ENCODE measurements at regions of chr7 and their contacts with region 1.

Region 1: DNA sequence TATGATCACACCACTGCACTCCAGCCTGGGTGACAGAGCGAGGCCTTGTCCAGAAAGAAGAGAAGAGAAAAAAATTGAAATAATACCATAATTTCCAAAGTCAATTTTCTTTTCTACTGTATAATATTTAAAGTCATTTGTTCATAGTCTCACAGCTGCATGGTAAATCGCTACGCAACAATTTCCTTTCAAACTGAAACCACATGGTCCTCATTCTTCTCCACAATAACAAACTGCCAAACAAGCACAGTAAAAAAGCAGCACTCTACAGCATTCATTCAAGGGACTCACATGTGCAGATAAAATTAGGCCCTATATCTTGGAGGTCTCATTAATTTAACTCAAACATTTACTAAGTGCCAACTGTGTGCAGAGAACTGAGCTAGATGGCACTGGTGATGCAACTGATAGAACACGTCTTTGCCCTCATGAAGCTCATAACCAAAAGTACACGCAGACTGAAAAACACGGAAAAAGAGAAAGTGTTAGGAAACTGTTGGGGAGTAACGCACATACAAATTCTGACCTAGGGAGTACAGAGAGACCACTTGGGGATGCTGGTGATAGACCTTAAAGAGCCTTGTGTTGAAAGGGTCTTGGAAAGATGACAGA is 68.4 kb upstream of the SRRM3 start:
- DNase-seq: no peak
- H3K4me3 ChIP-seq: no peak overlapping the region
- H3K27ac ChIP-seq: no peak overlapping the region
- H3K4me1 ChIP-seq: no peaks in the 10 kb centered on the region
- H3K27me3 ChIP-seq: no peaks in the 10 kb centered on the region
- CTCF ChIP-seq: no peak

Region 2: DNA sequence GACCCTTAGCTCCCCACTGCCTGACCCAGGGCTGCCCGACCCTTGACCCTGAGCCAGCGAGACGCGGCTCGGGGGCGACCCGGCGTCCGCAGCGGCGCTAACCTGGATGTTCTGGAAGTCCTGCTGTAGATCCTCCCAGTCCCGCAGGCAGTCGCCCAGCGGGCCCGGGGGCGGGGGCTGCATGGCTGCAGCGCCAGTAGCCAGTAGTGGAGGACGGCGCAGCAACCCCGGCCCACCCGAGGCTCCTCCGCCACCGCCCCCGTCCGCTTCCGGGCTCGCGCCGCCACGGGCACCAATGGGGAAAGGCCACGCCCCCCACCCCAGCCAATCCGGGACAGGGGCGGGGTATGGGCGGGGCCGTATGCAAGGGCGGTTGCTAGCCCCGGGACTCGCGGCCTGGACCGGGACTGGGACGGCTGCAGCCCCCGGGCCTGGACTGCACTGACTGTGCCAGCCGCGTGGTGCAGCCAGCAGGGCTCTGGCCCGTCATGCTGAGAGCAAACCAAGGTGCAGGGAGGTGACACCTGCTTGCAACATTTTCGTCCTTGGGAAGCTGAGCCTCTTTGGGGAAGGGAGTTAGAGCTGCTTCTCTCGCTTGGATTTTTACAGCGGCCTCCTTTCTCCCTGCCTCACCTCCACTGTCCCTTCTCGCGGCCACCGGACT is 138.8 kb before region 1 on chr7 and contains the start of gene TMEM120A:
- CTCF ChIA-PET with region 1: no interaction called
- dilution Hi-C with region 1: no loop called
- in situ Hi-C with region 1: no loop called
- intact Hi-C with region 1: loop called (anchors 1 kb)
- DNase-seq: peak; percentile 89
- H3K4me3 ChIP-seq: peak within 1 kb of the TSS; percentile 86 to 92 (median 90)
- H3K27ac ChIP-seq: no peak within 1 kb of the TSS
- H3K4me1 ChIP-seq: peaks cover 9% of the 10 kb centered on the region
- H3K27me3 ChIP-seq: no peaks in the 10 kb centered on the region
- CTCF ChIP-seq: peak in 1 of 2 donors; percentile 14
- total RNA-seq, gene TMEM120A: 15.8 to 30.3 TPM

Region 3: GRCh38 chr7:76020031-76020714 is 113.1 kb before region 1 on chr7:
- CTCF ChIA-PET with region 1: no interaction called
- dilution Hi-C with region 1: no loop called
- in situ Hi-C with region 1: no loop called
- intact Hi-C with region 1: loop called (anchors 5 kb)
- DNase-seq: peak; percentile 20
- H3K4me3 ChIP-seq: no peak overlapping the region
- H3K27ac ChIP-seq: no peak overlapping the region
- H3K4me1 ChIP-seq: no peaks in the 10 kb centered on the region
- H3K27me3 ChIP-seq: no peaks in the 10 kb centered on the region
- CTCF ChIP-seq: peak; percentile 68 to 81

Region 4: DNA sequence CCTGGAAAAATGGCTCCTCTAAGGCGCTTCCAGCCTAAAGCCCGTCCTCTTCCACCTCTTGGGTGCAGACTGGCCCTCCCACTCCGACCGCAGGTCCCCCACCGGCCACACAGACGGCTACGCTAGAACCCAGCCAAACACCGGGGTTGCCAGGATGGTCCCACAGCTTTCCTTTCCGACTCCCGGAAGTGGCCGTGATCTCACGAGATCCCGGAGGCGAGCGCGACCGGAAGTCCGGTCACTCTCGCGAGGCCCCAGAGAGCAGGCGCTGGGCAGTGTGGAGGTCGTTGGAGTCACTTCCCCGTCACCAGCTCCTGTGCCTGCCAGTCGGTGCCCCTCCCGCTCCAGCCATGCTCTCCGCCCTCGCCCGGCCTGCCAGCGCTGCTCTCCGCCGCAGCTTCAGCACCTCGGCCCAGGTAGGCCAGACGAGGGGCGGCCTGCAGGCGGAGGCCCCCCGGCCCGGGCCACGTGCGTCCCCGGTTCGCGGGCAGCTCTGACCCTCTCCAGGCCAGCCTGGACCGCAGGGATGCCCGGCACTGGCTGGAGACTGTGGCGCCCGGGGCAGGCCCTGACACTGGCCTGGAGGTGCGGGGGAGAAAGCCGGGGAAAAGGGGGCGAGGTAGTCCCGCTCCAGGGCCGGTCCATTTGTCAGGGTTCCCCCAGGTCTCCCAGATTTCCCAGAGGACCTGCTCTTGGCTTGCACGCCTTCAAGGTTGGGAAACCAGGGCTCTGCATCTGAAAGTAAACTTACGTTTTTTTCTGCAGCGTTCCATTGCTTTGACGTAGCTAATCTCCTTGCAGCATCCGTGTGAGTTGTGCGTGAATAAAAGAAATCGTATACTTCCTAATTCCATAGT is 85.2 kb before region 1 on chr7 and contains the starts of genes MDH2 and STYXL1:
- CTCF ChIA-PET with region 1: no interaction called
- dilution Hi-C with region 1: no loop called
- in situ Hi-C with region 1: no loop called
- intact Hi-C with region 1: loop called (anchors 5 kb)
- DNase-seq: peak; percentile 97
- H3K4me3 ChIP-seq: peak within 1 kb of the TSS; percentile 77 to 97 (median 84)
- H3K27ac ChIP-seq: peak within 1 kb of the TSS; percentile 89
- H3K4me1 ChIP-seq: peaks cover 9% of the 10 kb centered on the region
- H3K27me3 ChIP-seq: no peaks in the 10 kb centered on the region
- CTCF ChIP-seq: no peak
- total RNA-seq, gene MDH2: 44.0 to 188 TPM
- total RNA-seq, gene STYXL1: 43.0 to 44.3 TPM